Aorta (tissue), 5 donors: ENCODE measurements at regions of chr7 and their contacts with region 1.

Region 1: GRCh38 chr7:151028131-151028947 is at the start of gene ABCB8:
- DNase-seq: peak; percentile 97 to 98
- ATAC-seq: peak; percentile 98
- H3K4me3 ChIP-seq: peak within 1 kb of the TSS; percentile 62 to 81
- H3K27ac ChIP-seq: peak within 1 kb of the TSS in 1 of 2 donors; percentile 11
- H3K4me1 ChIP-seq: no peaks in the 10 kb centered on the region
- H3K27me3 ChIP-seq: no peaks in the 10 kb centered on the region
- total RNA-seq, gene ABCB8: 18.7 to 30.8 TPM

Region 2: DNA sequence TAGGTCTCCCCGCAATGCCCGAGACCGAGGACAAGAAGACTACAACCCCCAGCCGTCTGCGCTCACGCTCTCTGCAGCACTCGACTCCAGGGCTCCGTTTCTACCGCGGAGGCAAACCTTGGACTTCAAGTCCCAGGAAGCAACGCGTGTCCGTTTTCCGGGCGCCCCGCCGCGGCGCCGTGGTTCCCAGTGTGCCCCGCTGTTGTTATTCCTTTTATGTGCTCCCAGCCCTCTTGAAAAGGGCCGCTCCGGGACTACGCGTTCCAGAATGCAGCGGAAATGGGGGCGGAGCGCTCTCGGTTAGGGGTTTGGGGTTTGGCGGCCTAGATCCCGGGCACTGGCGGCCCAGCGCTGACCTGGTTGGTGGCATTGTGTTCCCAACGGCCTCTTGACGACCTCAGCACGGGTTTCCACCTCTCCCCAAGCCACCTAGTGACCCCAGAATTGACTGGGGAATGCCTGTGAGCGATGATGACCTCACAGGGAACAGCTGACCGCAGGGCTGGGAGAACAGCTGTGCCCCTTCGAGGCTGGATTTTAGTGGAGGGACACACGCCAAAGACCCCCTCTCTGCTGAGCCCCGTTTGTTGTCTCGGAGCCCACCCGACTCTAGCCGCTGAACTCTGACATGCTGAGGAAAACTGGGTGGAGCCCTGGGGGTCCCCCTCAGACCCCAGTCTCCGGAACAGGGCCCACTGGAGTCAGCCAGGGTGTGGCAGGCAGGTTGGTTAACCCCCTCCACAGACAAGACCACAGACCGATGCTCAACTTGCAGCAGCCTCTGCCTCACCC is 29.8 kb after region 1 on chr7:
- intact Hi-C with region 1: loop called in 1 of 2 experiments (anchors 2 kb)
- DNase-seq: peak; percentile 99 to 100
- ATAC-seq: peak; percentile 95
- H3K4me3 ChIP-seq: peak overlapping the region; percentile 54 to 75
- H3K27ac ChIP-seq: peak overlapping the region; percentile 28 to 93
- H3K4me1 ChIP-seq: no peaks in the 10 kb centered on the region
- H3K27me3 ChIP-seq: no peaks in the 10 kb centered on the region